ENCODE measurements at regions of chr4 and their contacts with region 1.

Region 1: DNA sequence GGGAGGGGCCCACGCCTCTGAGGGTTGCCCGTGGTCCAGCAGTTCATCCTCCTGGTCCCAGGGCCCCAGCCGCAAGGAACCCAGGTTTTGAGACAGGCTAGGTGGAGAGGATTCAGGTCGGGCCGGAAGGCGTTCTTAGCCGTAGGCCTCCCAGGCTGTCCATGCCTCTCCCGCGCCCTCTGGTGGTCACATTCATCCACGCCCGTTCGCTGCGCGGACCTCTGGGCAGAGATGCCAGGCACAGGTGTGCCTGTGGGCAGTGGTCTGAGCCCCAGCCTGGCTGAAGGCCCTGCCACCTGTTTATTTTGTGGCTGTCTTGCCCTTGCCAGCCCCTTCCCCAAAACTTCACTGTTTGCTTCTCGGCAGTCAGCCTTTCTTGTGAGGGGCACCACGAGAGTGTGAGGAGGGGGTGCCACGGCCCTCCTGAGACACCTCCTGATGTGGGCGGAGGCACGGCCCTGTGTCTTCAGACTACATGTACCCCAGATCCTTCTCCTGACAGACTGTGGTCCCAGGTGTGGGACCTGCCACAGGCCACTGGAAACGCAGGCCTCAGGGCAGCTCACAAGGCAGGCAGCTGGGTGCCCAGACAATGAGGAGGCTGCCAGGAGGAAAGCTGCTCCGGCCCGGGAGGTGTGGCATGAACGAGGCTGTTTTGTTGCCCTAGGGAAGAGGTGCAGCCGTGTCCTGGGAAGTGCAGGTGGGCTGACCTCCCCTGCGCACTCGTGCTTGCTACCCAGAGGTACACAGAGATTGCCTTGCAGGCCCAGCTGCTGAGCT is 5.0 kb downstream of the UVSSA start:
- DNase-seq: peak; percentile 72
- H3K4me3 ChIP-seq: no peak overlapping the region
- H3K27ac ChIP-seq: no peak overlapping the region
- H3K4me1 ChIP-seq: no peaks in the 10 kb centered on the region
- H3K27me3 ChIP-seq: no peaks in the 10 kb centered on the region
- CTCF ChIP-seq: peak; percentile 92

Region 2: GRCh38 chr4:634121-634985 is 717.7 kb before region 1 on chr4:
- CTCF ChIA-PET with region 1: no interaction called
- POLR2A ChIA-PET with region 1: no interaction called
- intact Hi-C with region 1: no loop called
- DNase-seq: no peak
- H3K4me3 ChIP-seq: no peak overlapping the region
- H3K27ac ChIP-seq: no peak overlapping the region
- H3K4me1 ChIP-seq: no peaks in the 10 kb centered on the region
- H3K27me3 ChIP-seq: peaks cover 15% of the 10 kb centered on the region
- CTCF ChIP-seq: no peak

Region 3: GRCh38 chr4:1130316-1131186 is 221.5 kb before region 1 on chr4:
- CTCF ChIA-PET with region 1: no interaction called
- POLR2A ChIA-PET with region 1: no interaction called
- intact Hi-C with region 1: loop called (anchors 2 kb)
- DNase-seq: peak; percentile 82
- H3K4me3 ChIP-seq: no peak overlapping the region
- H3K27ac ChIP-seq: no peak overlapping the region
- H3K4me1 ChIP-seq: no peaks in the 10 kb centered on the region
- H3K27me3 ChIP-seq: peaks cover 15% of the 10 kb centered on the region
- CTCF ChIP-seq: peak; percentile 99

Region 4: DNA sequence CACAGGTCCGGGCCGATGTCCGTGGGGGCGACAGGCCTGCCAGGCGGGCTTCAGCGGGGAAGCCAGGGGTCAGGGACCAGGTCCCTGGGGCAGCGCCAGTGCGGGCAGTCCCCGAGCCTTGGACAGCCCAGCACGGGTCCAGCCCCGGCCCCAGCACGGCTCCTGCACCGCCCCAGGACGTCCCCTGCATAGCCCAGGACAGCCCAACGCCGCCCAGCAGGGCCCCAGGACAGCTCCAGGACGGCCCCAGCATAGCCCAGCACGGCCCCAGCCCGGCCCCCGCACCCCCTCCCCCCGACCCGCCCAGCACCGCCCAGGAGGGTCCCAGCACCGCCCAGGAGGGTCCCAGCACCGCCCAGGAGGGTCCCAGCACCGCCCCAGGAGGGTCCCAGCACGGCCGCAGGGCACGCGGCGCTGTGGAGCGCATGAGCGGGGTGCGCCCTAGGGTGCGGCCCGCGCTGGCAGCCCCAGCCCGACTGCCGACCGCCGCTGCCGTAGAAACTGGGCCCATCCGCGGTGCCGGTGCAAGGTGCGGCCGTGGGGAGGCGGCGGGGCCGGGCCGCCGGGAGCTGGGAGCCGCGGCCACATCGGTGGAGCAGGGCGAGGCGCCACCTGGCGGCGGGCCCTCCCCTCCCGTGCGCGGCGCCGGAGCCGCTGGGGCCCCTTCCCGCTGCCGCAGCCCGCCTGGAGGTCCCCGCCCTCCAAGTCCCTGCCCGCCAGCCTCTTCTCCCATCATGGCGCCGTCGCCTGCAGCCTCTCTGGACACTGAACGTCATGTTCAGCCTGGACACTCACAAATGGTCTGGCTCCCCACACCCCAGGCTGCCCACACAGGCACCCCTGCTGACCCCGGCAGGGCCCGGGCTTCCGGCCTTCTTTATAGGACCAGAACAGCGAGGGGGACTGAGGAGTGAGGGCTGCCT is 161.0 kb after region 1 on chr4:
- CTCF ChIA-PET with region 1: no interaction called
- POLR2A ChIA-PET with region 1: no interaction called
- intact Hi-C with region 1: loop called (anchors 2 kb)
- DNase-seq: peak; percentile 54
- H3K4me3 ChIP-seq: peak overlapping the region; percentile 25
- H3K27ac ChIP-seq: no peak overlapping the region
- H3K4me1 ChIP-seq: no peaks in the 10 kb centered on the region
- H3K27me3 ChIP-seq: peaks cover 26% of the 10 kb centered on the region
- CTCF ChIP-seq: peak; percentile 51; the same call in 1 of the 2 replicates

Region 5: DNA sequence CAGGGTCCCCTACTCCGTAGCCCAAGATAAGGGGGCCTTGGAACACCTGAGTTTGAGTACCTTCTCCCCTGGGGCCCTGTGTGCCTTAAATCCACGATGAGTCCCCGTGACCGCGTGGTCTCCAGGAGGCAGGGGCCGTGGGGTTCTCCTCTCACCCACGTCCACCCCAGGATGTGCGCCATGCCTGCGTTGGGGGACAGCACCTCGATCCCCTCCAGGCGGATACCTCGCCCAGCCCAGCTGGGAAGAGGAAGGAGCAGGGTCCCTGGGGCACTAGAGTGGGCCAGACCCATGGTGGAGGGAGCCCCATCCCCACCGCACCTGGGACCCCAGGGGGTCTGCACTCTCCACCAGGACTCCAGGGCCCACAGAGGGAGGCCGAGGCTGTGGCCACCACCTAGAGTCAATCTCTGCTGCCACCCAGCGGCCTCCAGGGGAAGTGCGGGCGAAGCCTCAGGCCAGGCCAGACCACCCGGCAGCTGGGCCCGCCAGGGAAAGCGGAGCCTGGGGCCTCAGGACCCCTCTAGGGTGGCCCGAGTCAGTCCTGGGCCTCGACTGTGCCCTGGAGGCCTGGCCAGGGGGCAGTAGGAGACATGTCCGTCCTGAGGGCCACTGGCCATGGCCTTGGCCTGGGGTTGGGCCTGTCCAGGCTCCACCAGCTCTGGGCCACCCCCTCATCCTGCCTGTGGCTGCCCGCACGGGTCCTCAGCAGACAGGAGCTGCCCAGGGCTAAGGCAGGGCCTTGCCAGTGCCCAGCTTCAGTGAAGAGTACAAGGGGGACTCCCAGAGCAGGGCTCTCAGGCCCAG is 277.1 kb after region 1 on chr4:
- CTCF ChIA-PET with region 1: interaction called, 3 read pairs
- POLR2A ChIA-PET with region 1: no interaction called
- intact Hi-C with region 1: loop called (anchors 5 kb)
- DNase-seq: peak; percentile 65
- H3K4me3 ChIP-seq: no peak overlapping the region
- H3K27ac ChIP-seq: no peak overlapping the region
- H3K4me1 ChIP-seq: no peaks in the 10 kb centered on the region
- H3K27me3 ChIP-seq: peaks cover 14% of the 10 kb centered on the region
- CTCF ChIP-seq: peak; percentile 95

Region 6: DNA sequence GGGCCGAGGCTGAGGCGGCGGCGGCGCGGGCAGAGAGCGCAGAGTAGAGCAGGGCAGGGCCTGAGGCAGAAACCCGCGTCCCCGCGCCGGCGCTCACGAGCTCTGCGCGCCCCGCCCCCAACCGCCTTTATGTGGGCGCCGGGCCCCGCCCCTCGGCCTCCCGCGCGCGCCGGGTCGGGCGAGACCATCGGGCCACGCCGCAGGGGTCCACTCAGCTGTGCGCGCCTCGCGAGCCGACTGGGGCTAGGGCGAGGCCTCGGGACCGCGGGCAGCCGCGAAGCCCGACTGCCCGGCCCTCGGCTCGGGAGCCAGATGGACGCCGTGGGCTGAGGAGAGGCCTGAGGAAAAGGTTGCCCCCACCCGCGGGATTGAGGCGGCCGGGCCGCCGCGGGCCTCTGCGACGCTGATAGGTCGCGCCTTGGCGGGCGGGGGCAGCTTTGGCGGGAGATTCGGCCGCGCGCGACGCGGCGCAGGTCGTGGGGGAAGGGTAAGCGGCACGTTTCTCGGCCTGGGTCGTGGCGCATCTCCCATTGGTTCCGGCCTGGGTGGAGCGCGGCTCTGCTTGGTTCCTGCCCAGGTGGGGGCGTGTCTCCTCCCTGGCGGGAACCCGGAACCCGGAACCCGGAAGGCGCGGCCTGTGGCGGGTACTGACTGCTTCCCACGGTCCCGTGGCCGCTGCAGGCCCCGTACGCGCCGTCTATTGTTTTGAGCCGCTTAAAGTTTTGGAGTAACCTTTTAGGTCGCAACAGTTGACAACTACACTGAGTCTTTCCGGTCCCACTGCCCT is 360.4 kb after region 1 on chr4 and contains the start of gene SLBP:
- CTCF ChIA-PET with region 1: no interaction called
- POLR2A ChIA-PET with region 1: interaction called, 12 read pairs
- intact Hi-C with region 1: no loop called
- DNase-seq: peak; percentile 98
- H3K4me3 ChIP-seq: peak within 1 kb of the TSS; percentile 85
- H3K27ac ChIP-seq: peak within 1 kb of the TSS; percentile 100
- H3K4me1 ChIP-seq: peaks cover 24% of the 10 kb centered on the region
- H3K27me3 ChIP-seq: no peaks in the 10 kb centered on the region
- CTCF ChIP-seq: no peak
- total RNA-seq, gene SLBP: 85.5 and 89.5 TPM in 2 replicates

Region 7: GRCh38 chr4:1842993-1843448 is 491.0 kb after region 1 on chr4:
- CTCF ChIA-PET with region 1: no interaction called
- POLR2A ChIA-PET with region 1: no interaction called
- intact Hi-C with region 1: no loop called
- DNase-seq: no peak
- H3K4me3 ChIP-seq: no peak overlapping the region
- H3K27ac ChIP-seq: no peak overlapping the region
- H3K4me1 ChIP-seq: no peaks in the 10 kb centered on the region
- H3K27me3 ChIP-seq: no peaks in the 10 kb centered on the region
- CTCF ChIP-seq: no peak

Measured in A673 (cell line).